ENCODE measurements at regions of chr16 and their contacts with region 1.

Region 1: GRCh38 chr16:66894948-66895688 is 14.8 kb downstream of the PDP2 start:
- DNase-seq: peak; percentile 28 to 63 (median 31)
- H3K4me3 ChIP-seq: no peak overlapping the region
- H3K4me3 Mint-ChIP-seq: peak overlapping the region in 1 of 7 donors; percentile 19
- H3K27ac ChIP-seq: no peak overlapping the region
- H3K27ac Mint-ChIP-seq: peak overlapping the region in 2 of 8 donors; percentile 47 to 52
- H3K4me1 ChIP-seq: no peaks in the 10 kb centered on the region
- H3K4me1 Mint-ChIP-seq: peaks cover 3 to 10% (median 4%) of the 10 kb centered on the region in 3 donors
- H3K27me3 ChIP-seq: no peaks in the 10 kb centered on the region
- H3K27me3 Mint-ChIP-seq: no peaks in the 10 kb centered on the region

Region 2: DNA sequence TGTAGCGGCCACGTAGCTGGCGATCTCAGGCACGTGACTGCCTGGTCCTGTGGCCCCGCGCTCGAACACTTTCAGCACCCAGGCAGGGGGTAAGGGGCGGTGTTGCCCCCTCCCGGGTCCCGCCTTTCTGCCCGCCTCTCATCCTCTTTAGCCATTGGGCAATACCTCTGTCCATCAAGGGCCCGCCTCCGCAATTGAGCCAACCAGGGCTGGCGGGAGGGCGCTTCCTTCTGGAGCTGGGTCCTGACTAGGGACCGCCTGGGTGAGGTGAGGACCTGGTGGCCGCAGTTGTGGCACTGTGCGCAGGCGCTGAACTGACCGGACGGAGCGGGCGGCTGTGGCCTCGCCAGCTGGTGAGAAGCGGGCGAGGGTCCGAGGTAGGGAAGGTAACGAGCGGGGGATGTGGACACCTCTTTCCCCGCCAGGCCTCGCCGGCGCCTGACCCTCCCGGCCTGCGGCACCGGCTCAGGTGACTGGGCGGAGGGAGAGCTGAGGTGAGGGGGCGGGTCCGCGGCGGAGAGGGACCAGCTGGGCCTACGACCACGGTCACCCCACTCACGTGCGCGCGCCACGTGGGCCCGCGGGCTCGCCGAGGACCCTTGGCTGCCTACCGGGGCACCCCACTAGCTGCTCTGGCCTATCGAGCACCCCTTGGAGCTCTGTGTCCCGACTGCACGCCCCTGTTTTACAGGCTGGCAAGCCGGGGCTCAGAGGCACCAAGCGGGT is 14.7 kb before region 1 on chr16 and contains the start of gene PDP2:
- CTCF ChIA-PET with region 1: interaction called, 10 read pairs
- POLR2A ChIA-PET with region 1: interaction called, 9 read pairs
- DNase-seq: peak; percentile 80 to 94 (median 89)
- H3K4me3 ChIP-seq: peak within 1 kb of the TSS; percentile 80
- H3K4me3 Mint-ChIP-seq: peak within 1 kb of the TSS; percentile 96 to 99 (median 98)
- H3K27ac ChIP-seq: peak within 1 kb of the TSS; percentile 58
- H3K27ac Mint-ChIP-seq: peak within 1 kb of the TSS; percentile 49 to 99 (median 96)
- H3K4me1 ChIP-seq: peaks cover 21% of the 10 kb centered on the region
- H3K4me1 Mint-ChIP-seq: peaks cover 25 to 43% (median 41%) of the 10 kb centered on the region in 3 donors
- H3K27me3 ChIP-seq: no peaks in the 10 kb centered on the region
- H3K27me3 Mint-ChIP-seq: no peaks in the 10 kb centered on the region
- total RNA-seq, gene PDP2: 20.0 to 25.4 TPM

Region 3: GRCh38 chr16:66906916-66907836 is 12.1 kb after region 1 on chr16:
- CTCF ChIA-PET with region 1: interaction called, 3 read pairs
- POLR2A ChIA-PET with region 1: interaction called, 14 read pairs
- DNase-seq: no peak
- H3K4me3 ChIP-seq: no peak overlapping the region
- H3K4me3 Mint-ChIP-seq: no peak overlapping the region
- H3K27ac ChIP-seq: no peak overlapping the region
- H3K27ac Mint-ChIP-seq: no peak overlapping the region
- H3K4me1 ChIP-seq: peaks cover 7% of the 10 kb centered on the region
- H3K4me1 Mint-ChIP-seq: peaks cover 2 to 9% (median 9%) of the 10 kb centered on the region in 3 donors
- H3K27me3 ChIP-seq: no peaks in the 10 kb centered on the region
- H3K27me3 Mint-ChIP-seq: peaks cover 0 to 1% of the 10 kb centered on the region in 2 donors

Measured in CD8-positive, alpha-beta memory T cell (primary cell).